ENCODE measurements at regions of chr9 and their contacts with region 1.

Region 1: GRCh38 chr9:86257391-86257790 is 2.1 kb downstream of the C9orf153 start:
- DNase-seq: no peak
- H3K4me3 ChIP-seq: no peak overlapping the region
- H3K27ac ChIP-seq: no peak overlapping the region
- H3K4me1 ChIP-seq: no peaks in the 10 kb centered on the region
- H3K27me3 ChIP-seq: no peaks in the 10 kb centered on the region
- CTCF ChIP-seq: no peak
- EP300 ChIP-seq: no peak
- POLR2A ChIP-seq: no peak
- RAD21 ChIP-seq: no peak

Region 2: DNA sequence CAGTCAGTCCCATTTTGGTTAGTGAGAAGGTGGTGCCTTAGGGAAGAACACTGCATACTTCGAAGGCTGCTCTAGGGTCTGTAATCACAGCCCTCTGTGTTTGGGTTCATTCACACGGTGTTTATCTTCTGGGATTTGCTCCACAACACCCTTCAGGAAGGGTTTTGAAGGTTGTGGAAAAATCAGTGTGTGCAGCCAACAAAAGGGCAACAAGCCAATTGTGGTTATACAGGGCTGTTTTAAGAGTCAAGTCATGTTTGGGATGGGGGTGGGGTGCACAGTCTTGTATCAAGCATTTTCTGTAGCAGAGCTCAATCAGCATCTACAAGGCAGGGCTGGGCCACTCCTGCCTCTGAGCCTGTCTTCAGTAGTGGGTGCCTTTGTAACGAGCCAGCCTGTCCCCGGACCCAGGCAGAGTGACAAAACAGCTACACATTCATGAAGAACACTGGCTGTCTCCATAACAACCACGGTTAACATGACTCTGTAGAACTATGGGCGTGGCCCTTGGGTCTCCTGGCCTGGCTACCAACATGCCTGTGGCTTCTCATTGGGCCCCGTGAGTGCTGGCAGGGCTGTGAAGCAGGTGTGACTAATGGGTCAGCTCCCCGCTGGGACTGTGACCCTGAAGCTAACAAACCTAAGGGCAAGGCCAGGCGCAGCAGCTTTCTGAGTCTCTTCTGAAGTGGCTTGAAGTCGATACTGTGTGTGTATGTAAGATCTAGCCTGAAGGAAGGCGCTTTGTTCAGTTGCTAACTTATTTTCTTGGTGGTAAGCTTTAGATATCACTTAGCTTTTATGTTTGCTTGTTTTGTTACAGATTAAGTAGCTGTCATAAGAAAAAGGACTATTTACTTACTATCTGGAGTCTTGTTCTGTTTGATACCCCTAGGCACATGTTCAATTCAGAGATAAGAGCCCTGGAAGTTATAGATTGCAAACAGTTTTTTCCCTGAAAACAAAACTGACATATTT is 130.1 kb before region 1 on chr9:
- CTCF ChIA-PET with region 1: no interaction called
- POLR2A ChIA-PET with region 1: no interaction called
- DNase-seq: peak; percentile 68 to 77
- H3K4me3 ChIP-seq: no peak overlapping the region
- H3K27ac ChIP-seq: peak overlapping the region; percentile 35
- H3K4me1 ChIP-seq: peaks cover 5 to 21% (median 11%) of the 10 kb centered on the region in 4 experiments; a peak in 6 of 7 replicates
- H3K27me3 ChIP-seq: no peaks in the 10 kb centered on the region; a peak in 2 of 7 replicates
- CTCF ChIP-seq: no peak
- EP300 ChIP-seq: no peak
- POLR2A ChIP-seq: no peak
- RAD21 ChIP-seq: 0 out of 4 replicates have a peak, but pooled peaks of 1 of the 2 experiments have one; percentile 1

Region 3: DNA sequence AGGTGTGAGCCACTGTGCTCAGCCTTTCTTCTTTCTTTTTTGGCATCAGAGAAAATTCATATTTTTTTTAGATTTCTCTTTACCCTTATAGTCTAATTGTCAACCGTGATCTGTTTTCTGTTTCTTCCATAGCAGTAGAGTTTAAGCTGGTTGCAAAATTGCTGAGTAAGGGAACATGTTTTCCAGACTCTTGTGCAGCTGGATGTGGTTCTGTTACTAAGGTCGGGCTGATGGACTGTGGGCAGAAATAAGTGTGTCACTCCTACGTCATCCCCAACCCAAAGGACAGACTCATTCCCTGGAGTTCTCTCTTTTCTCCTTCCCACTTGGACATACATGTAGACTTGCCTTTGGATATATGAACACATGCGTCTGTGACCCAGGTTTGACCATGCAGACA is 93.9 kb before region 1 on chr9:
- CTCF ChIA-PET with region 1: no interaction called
- POLR2A ChIA-PET with region 1: no interaction called
- DNase-seq: no peak
- H3K4me3 ChIP-seq: no peak overlapping the region
- H3K27ac ChIP-seq: no peak overlapping the region
- H3K4me1 ChIP-seq: no peaks in the 10 kb centered on the region
- H3K27me3 ChIP-seq: no peaks in the 10 kb centered on the region
- CTCF ChIP-seq: no peak
- EP300 ChIP-seq: no peak
- POLR2A ChIP-seq: no peak
- RAD21 ChIP-seq: no peak

Region 4: GRCh38 chr9:86246752-86247161 is 10.6 kb before region 1 on chr9:
- CTCF ChIA-PET with region 1: interaction called, 16 read pairs
- POLR2A ChIA-PET with region 1: interaction called, 3 read pairs
- DNase-seq: no peak
- H3K4me3 ChIP-seq: no peak overlapping the region
- H3K27ac ChIP-seq: no peak overlapping the region
- H3K4me1 ChIP-seq: no peaks in the 10 kb centered on the region; a peak in 2 of 7 replicates
- H3K27me3 ChIP-seq: no peaks in the 10 kb centered on the region
- CTCF ChIP-seq: peak; percentile 27 to 46 (median 44)
- EP300 ChIP-seq: no peak
- POLR2A ChIP-seq: no peak
- RAD21 ChIP-seq: peak; percentile 62 to 75

Region 5: GRCh38 chr9:86275962-86276361 is 18.6 kb after region 1 on chr9:
- CTCF ChIA-PET with region 1: interaction called, 14 read pairs
- POLR2A ChIA-PET with region 1: interaction called, 5 read pairs
- DNase-seq: no peak
- H3K4me3 ChIP-seq: no peak overlapping the region
- H3K27ac ChIP-seq: no peak overlapping the region
- H3K4me1 ChIP-seq: peaks cover 0 to 6% (median 2%) of the 10 kb centered on the region in 4 experiments; a peak in 3 of 7 replicates
- H3K27me3 ChIP-seq: no peaks in the 10 kb centered on the region
- CTCF ChIP-seq: peak in 2 of 3 experiments; percentile 33 to 37; a peak in 3 of 4 replicates
- EP300 ChIP-seq: no peak
- POLR2A ChIP-seq: no peak
- RAD21 ChIP-seq: peak; percentile 51 to 57